ENCODE measurements at regions of chr5 and their contacts with region 1.

Region 1: GRCh38 chr5:64526734-64527439 is 21.1 kb downstream of the RGS7BP start:
- DNase-seq: no peak
- ATAC-seq: no peak
- H3K4me3 ChIP-seq: no peak overlapping the region
- H3K27ac ChIP-seq: no peak overlapping the region
- H3K4me1 ChIP-seq: peaks cover 4 to 7% of the 10 kb centered on the region in 2 donors
- H3K27me3 ChIP-seq: no peaks in the 10 kb centered on the region

Region 2: DNA sequence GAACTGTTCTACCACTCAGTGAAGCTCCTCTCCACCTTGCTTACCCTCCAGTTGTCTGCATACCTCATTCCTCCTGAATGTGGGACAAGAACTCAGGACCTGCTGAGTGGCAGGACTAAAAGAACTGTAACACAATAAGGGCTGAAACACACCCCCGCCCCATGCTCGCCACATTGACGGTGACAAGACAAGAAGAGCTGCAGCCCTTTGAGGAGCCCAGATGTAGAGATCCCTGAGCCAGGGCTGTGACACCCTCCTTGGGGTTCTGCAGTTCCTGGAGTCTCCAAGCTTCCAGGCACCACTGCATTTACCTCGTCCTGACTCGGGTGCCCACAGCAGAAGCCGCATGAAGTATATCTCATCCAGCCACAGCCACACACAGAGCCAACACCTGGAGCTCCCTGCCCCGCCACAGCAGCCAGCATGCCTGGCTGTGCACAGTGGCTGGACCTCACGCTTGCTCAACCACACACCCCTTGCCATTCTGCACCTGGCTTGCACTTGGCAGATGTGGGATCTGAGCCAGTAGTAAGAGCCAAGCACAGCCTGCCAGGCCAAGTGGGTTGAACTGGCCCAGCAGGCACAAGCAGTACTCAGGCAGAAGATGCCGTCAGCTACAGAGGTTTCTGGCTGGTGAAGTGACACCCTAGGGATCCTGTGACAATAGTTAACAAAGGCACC is 195.2 kb before region 1 on chr5:
- intact Hi-C with region 1: no loop called
- DNase-seq: peak; percentile 48 to 72
- ATAC-seq: peak; percentile 60
- H3K4me3 ChIP-seq: no peak overlapping the region
- H3K27ac ChIP-seq: no peak overlapping the region
- H3K4me1 ChIP-seq: no peaks in the 10 kb centered on the region
- H3K27me3 ChIP-seq: no peaks in the 10 kb centered on the region

Region 3: DNA sequence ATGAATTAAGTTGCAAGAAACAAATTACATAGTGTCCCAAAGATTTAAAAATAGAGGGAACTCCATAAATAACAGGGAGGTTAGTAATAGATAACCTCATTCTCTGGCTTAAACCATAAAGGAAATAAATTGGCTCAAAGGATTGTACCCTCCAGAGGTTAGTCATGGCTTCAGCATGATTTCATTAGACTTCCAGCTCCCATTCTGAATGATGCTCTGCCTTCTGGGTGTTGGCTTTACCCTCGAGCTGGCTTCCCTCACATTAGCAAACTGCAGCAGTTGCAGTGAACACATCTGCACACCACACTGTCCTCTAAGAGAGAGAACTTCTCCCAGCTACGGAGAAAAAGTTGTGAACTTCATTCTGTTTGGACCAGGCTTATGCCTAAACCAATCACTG is 49.4 kb after region 1 on chr5:
- intact Hi-C with region 1: loop called in 1 of 2 experiments (anchors 5 kb)
- DNase-seq: no peak
- ATAC-seq: peak; percentile 57
- H3K4me3 ChIP-seq: no peak overlapping the region
- H3K27ac ChIP-seq: peak overlapping the region in 1 of 2 donors; percentile 2
- H3K4me1 ChIP-seq: peaks cover 0 to 2% of the 10 kb centered on the region in 2 donors
- H3K27me3 ChIP-seq: no peaks in the 10 kb centered on the region

Measured in aorta (tissue), 5 donors.